HepG2 (cell line): ENCODE measurements at regions of chr2 and their contacts with region 1.

Region 1: GRCh38 chr2:127996160-127996559 is 31.7 kb downstream of the SAP130 start:
- DNase-seq: no peak
- ATAC-seq: no peak
- H3K4me3 ChIP-seq: no peak overlapping the region
- H3K27ac ChIP-seq: no peak overlapping the region
- H3K4me1 ChIP-seq: peaks cover 10% of the 10 kb centered on the region
- H3K27me3 ChIP-seq: no peaks in the 10 kb centered on the region
- CTCF ChIP-seq: no peak
- EP300 ChIP-seq: no peak
- POLR2A ChIP-seq: no peak
- RAD21 ChIP-seq: no peak

Region 2: GRCh38 chr2:128727914-128728313 is 731.8 kb after region 1 on chr2:
- CTCF ChIA-PET with region 1: no interaction called
- POLR2A ChIA-PET with region 1: no interaction called
- in situ Hi-C with region 1: no loop called
- intact Hi-C with region 1: loop called (anchors 5 kb)
- DNase-seq: no peak
- ATAC-seq: no peak
- H3K4me3 ChIP-seq: no peak overlapping the region
- H3K27ac ChIP-seq: no peak overlapping the region
- H3K4me1 ChIP-seq: no peaks in the 10 kb centered on the region
- H3K27me3 ChIP-seq: peaks cover 0 to 10% of the 10 kb centered on the region in 2 experiments; a peak in 1 of 5 replicates
- CTCF ChIP-seq: no peak
- EP300 ChIP-seq: no peak
- POLR2A ChIP-seq: no peak
- RAD21 ChIP-seq: no peak